ENCODE measurements at regions of chr11 and their contacts with region 1.

Region 1: DNA sequence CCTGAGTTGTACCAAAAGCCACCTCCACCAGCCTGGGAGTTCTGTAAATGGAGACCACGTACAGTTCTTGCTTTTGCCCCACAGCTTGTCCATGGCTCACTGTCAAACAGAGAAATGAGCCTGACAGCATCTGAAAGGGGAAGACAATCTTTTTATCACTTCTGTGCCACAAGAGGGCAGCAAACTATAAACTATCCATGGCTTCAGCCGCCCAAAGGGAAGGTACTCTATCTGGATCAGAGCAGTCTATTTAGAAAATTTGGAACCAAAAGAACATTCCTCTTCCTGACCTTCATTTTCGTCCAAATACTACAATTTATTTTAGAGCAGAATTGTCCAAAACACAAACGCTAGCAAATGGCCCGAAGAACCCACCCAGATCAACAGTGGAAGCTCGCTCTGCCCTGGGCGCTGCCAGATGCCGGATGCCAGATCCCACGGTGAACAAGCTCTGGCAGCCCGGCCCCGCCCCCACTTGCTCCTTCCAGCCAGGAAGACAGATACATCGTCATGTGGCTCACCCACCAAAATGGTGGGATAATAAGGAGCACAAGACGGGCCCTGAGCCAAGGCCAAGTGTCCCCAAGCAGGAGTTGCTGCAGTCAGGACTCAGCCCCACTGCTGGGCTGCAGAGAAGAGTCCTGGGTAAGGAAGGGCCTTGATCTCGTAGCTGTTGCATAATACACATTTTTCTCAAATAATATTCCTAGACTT is 23.9 kb upstream of the SCGB1A1 start:
- DNase-seq: peak; percentile 28
- ATAC-seq: peak; percentile 97
- H3K4me3 ChIP-seq: no peak overlapping the region
- H3K27ac ChIP-seq: no peak overlapping the region
- H3K4me1 ChIP-seq: no peaks in the 10 kb centered on the region
- H3K27me3 ChIP-seq: no peaks in the 10 kb centered on the region
- CTCF ChIP-seq: peak; percentile 51 to 82 (median 68); a peak in 5 of 6 replicates
- EP300 ChIP-seq: no peak
- POLR2A ChIP-seq: no peak
- RAD21 ChIP-seq: peak; percentile 86

Region 2: GRCh38 chr11:62383822-62384221 is 11.2 kb before region 1 on chr11:
- CTCF ChIA-PET with region 1: interaction called, 33 read pairs
- POLR2A ChIA-PET with region 1: no interaction called
- RAD21 ChIA-PET with region 1: interaction called, 8 read pairs
- SMC1A ChIA-PET with region 1: interaction called, 5 read pairs
- in situ Hi-C with region 1: no loop called
- intact Hi-C with region 1: loop called (anchors 1 kb)
- DNase-seq: no peak
- ATAC-seq: no peak
- H3K4me3 ChIP-seq: no peak overlapping the region
- H3K27ac ChIP-seq: no peak overlapping the region
- H3K4me1 ChIP-seq: peaks cover 8% of the 10 kb centered on the region
- H3K27me3 ChIP-seq: no peaks in the 10 kb centered on the region
- CTCF ChIP-seq: no peak
- EP300 ChIP-seq: no peak
- POLR2A ChIP-seq: no peak
- RAD21 ChIP-seq: no peak

Region 3: GRCh38 chr11:62461740-62462507 is 66.9 kb after region 1 on chr11:
- CTCF ChIA-PET with region 1: interaction called, 13 read pairs
- POLR2A ChIA-PET with region 1: no interaction called
- RAD21 ChIA-PET with region 1: no interaction called
- SMC1A ChIA-PET with region 1: no interaction called
- in situ Hi-C with region 1: no loop called
- intact Hi-C with region 1: no loop called
- DNase-seq: no peak
- ATAC-seq: no peak
- H3K4me3 ChIP-seq: no peak overlapping the region
- H3K27ac ChIP-seq: no peak overlapping the region
- H3K4me1 ChIP-seq: peaks cover 9% of the 10 kb centered on the region; the same call in 1 of the 2 replicates
- H3K27me3 ChIP-seq: no peaks in the 10 kb centered on the region
- CTCF ChIP-seq: no peak
- EP300 ChIP-seq: no peak
- POLR2A ChIP-seq: no peak
- RAD21 ChIP-seq: no peak

Region 4: GRCh38 chr11:62567018-62567633 is 172.1 kb after region 1 on chr11:
- CTCF ChIA-PET with region 1: interaction called, 48 read pairs
- POLR2A ChIA-PET with region 1: no interaction called
- RAD21 ChIA-PET with region 1: interaction called, 5 read pairs
- SMC1A ChIA-PET with region 1: interaction called, 4 read pairs
- in situ Hi-C with region 1: no loop called
- intact Hi-C with region 1: no loop called
- DNase-seq: no peak
- ATAC-seq: peak; percentile 79
- H3K4me3 ChIP-seq: no peak overlapping the region
- H3K27ac ChIP-seq: peak overlapping the region; percentile 8
- H3K4me1 ChIP-seq: peaks cover 22% of the 10 kb centered on the region
- H3K27me3 ChIP-seq: no peaks in the 10 kb centered on the region
- CTCF ChIP-seq: no peak
- EP300 ChIP-seq: no peak
- POLR2A ChIP-seq: no peak
- RAD21 ChIP-seq: no peak

Region 5: GRCh38 chr11:62694455-62695167 is 299.6 kb after region 1 on chr11:
- CTCF ChIA-PET with region 1: interaction called, 17 read pairs
- POLR2A ChIA-PET with region 1: no interaction called
- RAD21 ChIA-PET with region 1: interaction called, 12 read pairs
- SMC1A ChIA-PET with region 1: interaction called, 12 read pairs
- in situ Hi-C with region 1: loop called (anchors 5 kb)
- intact Hi-C with region 1: loop called (anchors 2 kb)
- DNase-seq: no peak
- ATAC-seq: peak; percentile 99
- H3K4me3 ChIP-seq: no peak overlapping the region
- H3K27ac ChIP-seq: no peak overlapping the region
- H3K4me1 ChIP-seq: no peaks in the 10 kb centered on the region
- H3K27me3 ChIP-seq: no peaks in the 10 kb centered on the region
- CTCF ChIP-seq: peak; percentile 79 to 86 (median 82)
- EP300 ChIP-seq: no peak
- POLR2A ChIP-seq: no peak
- RAD21 ChIP-seq: peak; percentile 83

Region 6: DNA sequence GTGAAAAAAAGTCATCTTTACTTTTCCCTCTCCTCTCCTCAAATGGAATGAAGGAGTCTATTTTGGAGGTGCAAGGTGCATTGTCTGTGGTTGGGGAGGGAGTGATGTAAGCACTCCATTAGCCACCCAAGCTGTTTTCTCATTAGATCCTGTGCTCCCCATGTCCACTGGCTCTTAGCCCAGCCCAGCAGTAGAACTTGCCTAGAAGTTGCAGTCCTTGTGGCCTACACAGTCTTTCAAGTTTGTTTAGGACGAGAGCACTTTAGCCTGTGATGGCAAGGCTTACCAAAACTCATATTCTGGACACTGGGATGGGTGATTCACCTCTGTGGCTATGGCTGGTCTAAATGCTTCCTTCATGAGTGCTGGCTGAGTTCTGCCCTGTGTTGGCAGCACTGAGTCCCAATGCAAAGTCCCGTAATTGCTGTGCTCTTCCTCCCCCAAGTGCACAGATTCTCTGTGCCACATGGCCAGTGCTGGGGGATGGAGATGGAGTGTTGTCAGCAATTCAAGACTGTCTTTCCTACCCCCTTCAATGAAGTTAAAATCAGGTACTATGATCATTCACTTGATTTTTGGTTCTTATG is 832.6 kb after region 1 on chr11:
- CTCF ChIA-PET with region 1: no interaction called
- POLR2A ChIA-PET with region 1: no interaction called
- RAD21 ChIA-PET with region 1: no interaction called
- SMC1A ChIA-PET with region 1: no interaction called
- in situ Hi-C with region 1: no loop called
- intact Hi-C with region 1: no loop called
- DNase-seq: no peak
- ATAC-seq: no peak
- H3K4me3 ChIP-seq: no peak overlapping the region
- H3K27ac ChIP-seq: no peak overlapping the region
- H3K4me1 ChIP-seq: no peaks in the 10 kb centered on the region
- H3K27me3 ChIP-seq: no peaks in the 10 kb centered on the region
- CTCF ChIP-seq: no peak
- EP300 ChIP-seq: no peak
- POLR2A ChIP-seq: no peak
- RAD21 ChIP-seq: no peak